ENCODE measurements at regions of chr14 and their contacts with region 1.

Region 1: DNA sequence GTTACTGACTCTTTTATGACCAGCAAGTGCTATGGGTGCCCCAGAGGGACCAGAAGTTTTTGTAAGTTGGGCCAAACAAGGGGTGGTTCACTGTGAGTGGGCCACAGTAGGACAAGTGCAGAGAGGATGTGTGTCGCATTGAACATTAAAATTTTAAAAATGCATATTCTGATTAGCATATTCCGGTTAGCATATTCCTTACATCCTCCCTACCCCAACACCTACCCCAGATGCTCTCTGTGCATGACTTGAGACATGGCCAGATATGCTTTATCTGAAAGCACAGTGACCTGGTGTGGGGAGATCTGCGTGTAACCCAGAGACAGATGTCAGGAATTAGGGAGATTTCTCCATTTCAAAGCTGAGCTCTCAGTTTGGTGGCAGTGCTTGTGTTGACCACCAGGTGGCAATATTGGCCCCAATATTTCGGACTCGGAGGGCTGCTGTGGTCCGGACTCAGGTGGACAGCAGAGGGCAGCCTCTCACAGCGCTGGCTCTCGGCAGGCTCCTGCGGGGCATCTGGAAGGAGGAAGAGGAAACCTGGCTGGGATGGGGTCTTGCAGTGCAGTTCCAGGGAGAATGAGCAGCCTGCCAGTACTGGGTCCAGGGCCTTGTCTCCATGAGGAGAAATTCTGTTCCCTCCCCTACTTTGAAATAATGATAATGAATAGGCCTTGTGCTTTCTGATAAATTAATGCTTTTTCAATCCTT is 1.6 kb upstream of the CEBPE start:
- DNase-seq: peak; percentile 57 to 78
- H3K4me3 ChIP-seq: no peak overlapping the region
- H3K27ac ChIP-seq: no peak overlapping the region
- H3K4me1 ChIP-seq: peaks cover 7% of the 10 kb centered on the region
- H3K27me3 ChIP-seq: no peaks in the 10 kb centered on the region
- CTCF ChIP-seq: peak; percentile 95

Region 2: GRCh38 chr14:23186913-23187654 is 66.4 kb after region 1 on chr14:
- CTCF ChIA-PET with region 1: interaction called, 15 read pairs
- POLR2A ChIA-PET with region 1: interaction called, 3 read pairs
- intact Hi-C with region 1: loop called (anchors 1 kb)
- DNase-seq: peak; percentile 20 to 41
- H3K4me3 ChIP-seq: no peak overlapping the region
- H3K27ac ChIP-seq: no peak overlapping the region
- H3K4me1 ChIP-seq: peaks cover 10% of the 10 kb centered on the region
- H3K27me3 ChIP-seq: no peaks in the 10 kb centered on the region
- CTCF ChIP-seq: peak; percentile 81

Region 3: GRCh38 chr14:23269193-23269592 is 148.5 kb after region 1 on chr14:
- CTCF ChIA-PET with region 1: no interaction called
- POLR2A ChIA-PET with region 1: no interaction called
- intact Hi-C with region 1: loop called (anchors 10 kb)
- DNase-seq: no peak
- H3K4me3 ChIP-seq: no peak overlapping the region
- H3K27ac ChIP-seq: no peak overlapping the region
- H3K4me1 ChIP-seq: no peaks in the 10 kb centered on the region
- H3K27me3 ChIP-seq: no peaks in the 10 kb centered on the region
- CTCF ChIP-seq: no peak

Region 4: GRCh38 chr14:23301288-23301968 is 180.7 kb after region 1 on chr14:
- CTCF ChIA-PET with region 1: interaction called, 7 read pairs
- POLR2A ChIA-PET with region 1: no interaction called
- intact Hi-C with region 1: loop called (anchors 1 kb)
- DNase-seq: peak; percentile 86 to 97
- H3K4me3 ChIP-seq: peak overlapping the region; percentile 71
- H3K27ac ChIP-seq: peak overlapping the region; percentile 72
- H3K4me1 ChIP-seq: peaks cover 17% of the 10 kb centered on the region
- H3K27me3 ChIP-seq: no peaks in the 10 kb centered on the region
- CTCF ChIP-seq: peak; percentile 68

Region 5: DNA sequence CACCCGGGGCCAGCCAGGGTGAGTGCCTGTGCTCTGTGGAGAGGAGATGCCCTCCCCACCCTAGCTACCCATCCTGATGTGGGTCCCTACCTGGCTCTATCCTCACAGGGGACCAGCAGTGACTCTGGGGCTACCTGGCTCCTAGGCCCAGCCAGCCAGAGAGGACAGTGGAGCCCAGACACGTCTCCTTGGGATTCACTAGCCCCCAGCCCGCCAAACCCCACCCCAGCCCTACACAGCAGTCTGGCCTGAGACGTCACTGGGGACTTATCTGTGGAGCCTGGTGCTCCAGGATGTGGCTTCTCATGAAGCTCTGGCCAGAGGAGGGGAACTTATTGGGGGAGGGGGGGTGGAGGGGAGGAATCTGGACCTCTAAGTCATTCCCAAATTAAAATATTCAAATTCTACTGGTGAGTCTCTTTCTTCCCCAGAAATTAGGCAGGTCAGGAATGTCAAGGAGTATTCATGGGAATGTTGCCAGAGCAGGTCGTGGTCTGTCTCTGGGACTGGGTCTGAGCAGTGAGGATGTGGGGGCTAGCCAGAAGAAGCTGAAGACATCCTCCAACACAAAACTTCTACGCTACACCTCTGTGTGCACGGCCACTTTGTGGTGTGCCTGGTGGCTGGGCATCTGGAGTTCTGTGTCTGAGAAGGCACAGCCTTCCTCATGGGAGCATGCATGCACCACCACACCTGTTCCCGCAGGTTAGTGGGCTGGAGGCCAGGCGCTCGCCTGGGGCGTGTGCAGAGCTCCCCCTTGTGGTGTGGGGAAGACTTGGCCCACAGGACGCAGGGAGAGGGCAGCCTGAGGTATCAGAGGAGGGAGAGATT is 258.9 kb after region 1 on chr14:
- CTCF ChIA-PET with region 1: no interaction called
- POLR2A ChIA-PET with region 1: no interaction called
- intact Hi-C with region 1: loop called (anchors 2 kb)
- DNase-seq: peak in 1 of 2 experiments; percentile 65
- H3K4me3 ChIP-seq: no peak overlapping the region
- H3K27ac ChIP-seq: no peak overlapping the region
- H3K4me1 ChIP-seq: no peaks in the 10 kb centered on the region
- H3K27me3 ChIP-seq: peaks cover 78% of the 10 kb centered on the region
- CTCF ChIP-seq: peak; percentile 82

Measured in PC-9 (cell line).